Ascending aorta (tissue), 2 donors: ENCODE measurements at regions of chr19 and their contacts with region 1.

Region 1: DNA sequence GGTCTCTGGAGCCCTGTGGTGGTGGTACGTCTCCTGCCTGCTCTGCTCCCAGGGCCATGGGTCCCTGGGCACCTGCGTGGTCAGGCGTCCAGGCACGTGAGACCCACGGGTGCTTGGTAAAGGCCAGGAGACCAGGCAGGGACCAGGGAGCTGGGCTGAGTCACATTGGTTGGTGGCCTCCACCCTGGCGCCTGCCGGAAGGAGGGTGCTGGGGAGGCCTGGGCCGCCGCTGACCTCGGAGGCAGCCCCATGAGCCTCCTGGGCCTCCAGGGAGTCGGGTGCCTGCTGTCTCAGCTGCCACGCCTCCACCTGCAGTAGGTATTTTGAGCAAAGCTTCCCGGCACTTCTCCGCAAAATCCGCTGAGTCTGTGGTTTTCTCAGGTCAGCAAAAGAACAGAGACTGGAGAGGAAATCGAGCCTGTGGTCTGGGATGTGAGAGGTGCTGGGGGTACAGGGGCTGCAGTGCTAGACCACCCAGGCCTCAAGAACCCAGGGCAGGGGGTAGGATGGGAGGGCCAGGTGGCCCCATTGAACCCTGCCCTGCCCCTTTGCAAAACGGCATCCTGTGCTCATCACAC is 3.6 kb upstream of the PLK5 start:
- DNase-seq: no peak
- H3K4me3 ChIP-seq: no peak overlapping the region
- H3K27ac ChIP-seq: no peak overlapping the region
- H3K4me1 ChIP-seq: no peaks in the 10 kb centered on the region
- H3K27me3 ChIP-seq: peaks cover 5% of the 10 kb centered on the region
- CTCF ChIP-seq: no peak

Region 2: GRCh38 chr19:1151917-1152617 is 368.2 kb before region 1 on chr19:
- intact Hi-C with region 1: no loop called
- DNase-seq: peak in 1 of 2 donors; percentile 88
- H3K4me3 ChIP-seq: peak overlapping the region; percentile 37 to 43
- H3K27ac ChIP-seq: peak overlapping the region; percentile 78 to 81
- H3K4me1 ChIP-seq: peaks cover 17 to 42% of the 10 kb centered on the region in 2 donors
- H3K27me3 ChIP-seq: no peaks in the 10 kb centered on the region
- CTCF ChIP-seq: no peak

Region 3: GRCh38 chr19:1533510-1534150 is 13.3 kb after region 1 on chr19:
- intact Hi-C with region 1: loop called (anchors 1 kb)
- DNase-seq: no peak
- H3K4me3 ChIP-seq: no peak overlapping the region
- H3K27ac ChIP-seq: no peak overlapping the region
- H3K4me1 ChIP-seq: no peaks in the 10 kb centered on the region
- H3K27me3 ChIP-seq: no peaks in the 10 kb centered on the region
- CTCF ChIP-seq: no peak

Region 4: GRCh38 chr19:1577090-1577928 is 57.0 kb after region 1 on chr19:
- intact Hi-C with region 1: no loop called
- DNase-seq: no peak
- H3K4me3 ChIP-seq: no peak overlapping the region
- H3K27ac ChIP-seq: no peak overlapping the region
- H3K4me1 ChIP-seq: no peaks in the 10 kb centered on the region
- H3K27me3 ChIP-seq: no peaks in the 10 kb centered on the region
- CTCF ChIP-seq: no peak